ENCODE measurements at regions of chr9 and their contacts with region 1.

Region 1: GRCh38 chr9:86413966-86414880 is 60.0 kb upstream of the TUT7 start:
- DNase-seq: no peak
- ATAC-seq: peak in 1 of 4 donors; percentile 48
- H3K4me3 ChIP-seq: no peak overlapping the region
- H3K27ac ChIP-seq: no peak overlapping the region
- H3K4me1 ChIP-seq: peaks cover 0 to 7% (median 0%) of the 10 kb centered on the region in 12 donors
- H3K27me3 ChIP-seq: peaks cover 0 to under 1% (median 0%) of the 10 kb centered on the region in 9 donors
- CTCF ChIP-seq: peak; percentile 67 to 81 (median 75)
- POLR2A ChIP-seq: no peak

Region 2: GRCh38 chr9:86354011-86354817 is 60.0 kb before region 1 on chr9 and contains the start of gene TUT7:
- intact Hi-C with region 1: loop called in 1 of 10 experiments (anchors 2 kb)
- DNase-seq: peak; percentile 96 to 98 (median 97)
- ATAC-seq: peak; percentile 98
- H3K4me3 ChIP-seq: peak within 1 kb of the TSS; percentile 55 to 99 (median 84)
- H3K27ac ChIP-seq: peak within 1 kb of the TSS; percentile 84 to 99 (median 94)
- H3K4me1 ChIP-seq: peaks cover 4 to 62% (median 45%) of the 10 kb centered on the region in 12 donors
- H3K27me3 ChIP-seq: no peaks in the 10 kb centered on the region
- CTCF ChIP-seq: no peak
- POLR2A ChIP-seq: peak in 1 of 2 donors; percentile 86
- total RNA-seq, gene TUT7: 9.7 to 31.0 (median 16.5) TPM

Region 3: GRCh38 chr9:86486891-86487837 is 72.9 kb after region 1 on chr9:
- intact Hi-C with region 1: loop called in 1 of 10 experiments (anchors 5 kb)
- DNase-seq: no peak
- ATAC-seq: peak in 3 of 4 donors; percentile 67 to 75 (median 72)
- H3K4me3 ChIP-seq: no peak overlapping the region
- H3K27ac ChIP-seq: no peak overlapping the region
- H3K4me1 ChIP-seq: peaks cover 0 to 8% (median 0%) of the 10 kb centered on the region in 12 donors
- H3K27me3 ChIP-seq: no peaks in the 10 kb centered on the region
- CTCF ChIP-seq: peak; percentile 45 to 77 (median 67)
- POLR2A ChIP-seq: no peak

Region 4: DNA sequence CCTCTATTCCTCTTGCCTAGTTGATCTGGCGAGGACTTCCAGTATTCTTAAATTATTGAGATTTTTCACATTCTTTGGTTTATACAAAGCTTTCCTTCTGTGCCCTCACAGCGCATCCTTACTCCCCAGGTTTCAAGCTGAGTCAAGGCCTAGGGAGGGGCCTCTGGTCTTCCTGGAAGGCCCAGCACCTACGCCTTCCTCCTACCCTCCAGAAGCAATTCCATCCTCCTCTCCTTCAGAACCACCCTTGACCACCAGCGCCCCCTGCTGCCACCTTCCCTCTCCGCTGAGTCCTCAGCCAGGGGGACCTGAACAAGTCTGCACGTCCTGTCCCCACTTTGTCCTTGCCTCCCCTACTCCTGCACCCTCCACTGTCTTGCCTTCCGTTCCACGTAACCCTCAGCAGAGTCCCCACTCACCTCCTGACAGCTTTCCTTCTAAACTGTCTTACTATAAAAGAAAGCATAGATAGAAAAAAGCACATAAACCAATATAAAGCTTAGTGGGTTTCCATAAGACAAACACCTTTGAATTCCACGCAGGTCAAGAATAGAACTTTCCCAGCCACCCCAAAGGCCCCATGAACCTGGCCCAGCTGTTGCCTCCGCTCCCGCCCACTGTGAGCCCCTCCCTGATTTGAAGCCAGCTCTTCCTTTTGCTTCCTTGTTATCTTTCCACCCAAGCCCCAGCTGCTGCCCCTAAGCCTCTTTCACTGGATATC is 1248.7 kb after region 1 on chr9:
- intact Hi-C with region 1: loop called in 3 of 10 experiments (anchors 10 kb)
- DNase-seq: peak; percentile 59 to 86 (median 67)
- ATAC-seq: peak; percentile 58 to 89 (median 72)
- H3K4me3 ChIP-seq: no peak overlapping the region
- H3K27ac ChIP-seq: no peak overlapping the region
- H3K4me1 ChIP-seq: no peaks in the 10 kb centered on the region
- H3K27me3 ChIP-seq: peaks cover 0 to 5% (median 0%) of the 10 kb centered on the region in 9 donors
- CTCF ChIP-seq: peak; percentile 65 to 84 (median 74)
- POLR2A ChIP-seq: no peak

Measured in heart left ventricle (tissue), 16 donors.